GM13977 (cell line): ENCODE measurements at regions of chr6 and their contacts with region 1.

Region 1: DNA sequence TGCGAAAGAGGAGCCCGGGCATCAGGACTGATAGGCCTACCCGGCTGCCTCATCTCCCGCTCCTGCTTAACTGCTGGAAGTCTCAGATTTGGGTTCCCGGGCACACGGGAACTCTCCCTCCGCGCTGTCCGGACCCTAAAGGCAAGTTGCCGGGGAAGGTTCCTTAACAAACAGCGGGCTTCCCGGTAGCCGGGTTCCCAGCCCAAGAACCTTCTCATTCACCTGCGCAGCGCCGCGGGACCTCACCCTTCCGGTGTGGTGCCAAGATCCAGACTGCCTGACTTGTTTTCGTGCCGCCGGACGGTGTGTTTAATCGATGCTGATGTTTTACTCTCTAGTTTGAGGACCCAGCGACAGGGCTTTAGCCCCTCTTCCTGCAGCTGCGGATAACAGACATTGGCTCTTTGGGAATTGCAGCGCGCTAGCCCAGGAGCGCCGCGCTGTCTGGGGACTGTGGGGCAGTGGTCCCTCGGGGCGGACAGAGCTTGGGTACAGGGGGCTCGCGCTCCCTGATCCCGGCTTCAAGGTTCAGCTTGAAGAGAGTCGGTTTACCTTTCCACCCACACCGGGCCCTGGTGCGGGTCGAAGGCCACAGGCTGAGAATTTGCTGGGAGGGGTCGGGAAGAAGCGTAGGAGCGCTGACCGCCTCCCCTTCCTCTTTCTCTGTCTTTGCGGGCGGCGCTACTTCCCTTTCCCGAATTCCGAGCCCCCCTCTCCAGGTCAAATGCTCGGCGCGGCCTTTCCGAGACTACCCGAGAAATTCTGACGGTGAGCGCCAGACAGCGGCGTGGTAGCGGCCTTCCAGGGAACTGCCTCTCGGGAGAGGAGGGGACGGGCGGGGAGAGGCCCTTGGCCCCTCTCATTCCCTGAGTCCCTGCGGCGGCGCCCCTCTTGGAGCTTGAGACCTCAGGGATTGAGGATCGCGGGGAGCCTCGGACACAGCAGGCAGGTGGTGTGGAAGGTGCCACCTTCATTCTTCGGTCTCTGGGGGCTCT is 17.2 kb downstream of the ABT1 start:
- DNase-seq: no peak
- CTCF ChIP-seq: no peak

Region 2: DNA sequence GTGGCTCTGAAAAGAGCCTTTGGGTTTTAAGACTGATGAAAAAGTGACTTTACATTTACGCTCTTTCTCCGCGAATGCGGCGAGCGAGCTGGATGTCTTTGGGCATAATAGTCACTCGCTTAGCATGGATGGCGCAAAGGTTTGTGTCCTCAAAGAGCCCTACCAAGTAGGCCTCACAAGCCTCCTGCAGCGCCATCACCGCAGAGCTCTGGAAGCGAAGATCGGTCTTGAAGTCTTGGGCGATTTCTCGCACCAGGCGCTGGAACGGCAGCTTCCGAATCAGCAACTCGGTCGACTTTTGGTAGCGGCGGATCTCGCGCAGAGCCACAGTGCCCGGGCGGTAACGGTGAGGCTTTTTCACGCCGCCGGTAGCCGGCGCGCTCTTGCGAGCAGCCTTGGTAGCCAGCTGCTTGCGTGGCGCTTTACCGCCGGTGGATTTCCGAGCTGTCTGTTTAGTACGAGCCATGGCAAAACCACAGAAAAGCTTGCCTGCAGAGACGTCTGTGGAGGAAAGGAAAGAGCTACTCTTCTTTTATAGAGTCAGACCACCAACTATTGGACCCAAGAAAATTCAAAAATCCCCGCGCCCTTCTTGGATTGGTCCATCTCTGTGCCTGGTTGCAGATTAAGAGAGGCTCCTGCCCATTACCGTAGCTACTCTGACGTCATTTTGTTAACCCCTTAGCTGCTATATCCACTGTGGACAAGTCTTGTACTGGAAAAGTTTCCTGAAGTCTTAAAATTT is 582.2 kb before region 1 on chr6:
- in situ Hi-C with region 1: no loop called
- DNase-seq: peak; percentile 87
- CTCF ChIP-seq: peak; percentile 21

Region 3: DNA sequence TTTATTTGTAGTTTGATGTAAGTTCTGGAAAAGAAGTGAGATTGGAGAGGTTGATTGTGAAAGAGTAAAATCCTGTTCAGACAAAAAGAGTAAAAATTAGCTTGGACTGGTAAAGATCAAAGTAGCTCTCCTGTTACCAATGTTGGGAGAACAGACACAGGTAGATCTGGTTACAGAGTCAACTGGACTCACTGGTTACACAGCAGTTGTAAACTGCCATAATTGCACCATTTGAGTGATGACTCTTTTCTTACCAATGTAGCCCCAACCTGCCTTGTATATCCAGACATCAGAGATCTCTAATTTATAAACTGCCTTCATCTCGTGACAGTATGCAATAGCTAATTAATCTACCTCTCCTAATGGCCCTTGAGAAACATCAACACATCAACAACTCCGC is 467.9 kb after region 1 on chr6:
- in situ Hi-C with region 1: loop called (anchors 10 kb)
- DNase-seq: no peak
- CTCF ChIP-seq: no peak

Region 4: DNA sequence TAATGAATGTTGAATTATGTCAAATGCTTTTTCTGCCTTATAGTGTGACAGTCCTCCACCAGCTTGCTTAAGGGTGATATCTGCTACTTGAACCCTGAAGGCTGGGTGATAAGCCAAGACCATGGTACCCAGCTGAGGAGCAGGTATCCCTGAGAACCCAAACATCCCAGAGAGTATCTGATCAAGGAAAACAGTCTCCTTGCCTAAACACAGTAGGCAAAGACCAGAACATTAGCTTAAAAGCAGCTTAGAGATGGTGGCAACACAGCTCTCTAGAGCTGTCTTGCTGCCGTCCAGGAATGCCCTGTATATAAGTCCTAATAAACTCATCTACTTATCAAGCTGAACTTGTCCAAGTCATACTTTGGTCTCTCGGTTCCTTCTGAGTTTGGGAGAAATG is 505.8 kb after region 1 on chr6:
- in situ Hi-C with region 1: no loop called
- DNase-seq: no peak
- CTCF ChIP-seq: no peak